Caco-2 (cell line): ENCODE measurements at regions of chr7 and their contacts with region 1.

Region 1: GRCh38 chr7:5704534-5704922 is 76.9 kb downstream of the RNF216 start:
- DNase-seq: peak; percentile 64 to 75
- H3K4me3 ChIP-seq: no peak overlapping the region
- H3K4me3 Mint-ChIP-seq: no peak overlapping the region
- H3K27ac Mint-ChIP-seq: peak overlapping the region; percentile 17
- H3K4me1 ChIP-seq: no peaks in the 10 kb centered on the region
- H3K4me1 Mint-ChIP-seq: no peaks in the 10 kb centered on the region
- H3K27me3 ChIP-seq: no peaks in the 10 kb centered on the region
- H3K27me3 Mint-ChIP-seq: no peaks in the 10 kb centered on the region
- CTCF ChIP-seq: peak; percentile 88 to 89

Region 2: GRCh38 chr7:5445981-5446594 is 258.4 kb before region 1 on chr7:
- CTCF ChIA-PET with region 1: no interaction called
- POLR2A ChIA-PET with region 1: no interaction called
- intact Hi-C with region 1: no loop called
- DNase-seq: no peak
- H3K4me3 ChIP-seq: no peak overlapping the region
- H3K4me3 Mint-ChIP-seq: peak overlapping the region; percentile 12
- H3K27ac Mint-ChIP-seq: no peak overlapping the region
- H3K4me1 ChIP-seq: peaks cover 8% of the 10 kb centered on the region; the same call in 1 of the 2 replicates
- H3K4me1 Mint-ChIP-seq: no peaks in the 10 kb centered on the region
- H3K27me3 ChIP-seq: no peaks in the 10 kb centered on the region
- H3K27me3 Mint-ChIP-seq: no peaks in the 10 kb centered on the region
- CTCF ChIP-seq: no peak

Region 3: GRCh38 chr7:5677538-5678294 is 26.8 kb before region 1 on chr7:
- CTCF ChIA-PET with region 1: interaction called, 5 read pairs
- POLR2A ChIA-PET with region 1: no interaction called
- intact Hi-C with region 1: loop called (anchors 1 kb)
- DNase-seq: peak; percentile 64 to 71
- H3K4me3 ChIP-seq: no peak overlapping the region
- H3K4me3 Mint-ChIP-seq: no peak overlapping the region
- H3K27ac Mint-ChIP-seq: no peak overlapping the region
- H3K4me1 ChIP-seq: no peaks in the 10 kb centered on the region
- H3K4me1 Mint-ChIP-seq: peaks cover 13% of the 10 kb centered on the region
- H3K27me3 ChIP-seq: no peaks in the 10 kb centered on the region
- H3K27me3 Mint-ChIP-seq: no peaks in the 10 kb centered on the region
- CTCF ChIP-seq: peak; percentile 65 to 75